Activated CD4-positive, alpha-beta memory T cell treated with anti-CD3 and anti-CD28 coated beads for 36 hours (primary cell): ENCODE measurements at regions of chr2 and their contacts with region 1.

Region 1: GRCh38 chr2:64101141-64101591 is 43.1 kb downstream of the PELI1 start:
- DNase-seq: no peak
- H3K4me3 Mint-ChIP-seq: peak overlapping the region; percentile 49
- H3K27ac Mint-ChIP-seq: peak overlapping the region; percentile 78
- H3K4me1 Mint-ChIP-seq: peaks cover 63% of the 10 kb centered on the region
- H3K27me3 Mint-ChIP-seq: no peaks in the 10 kb centered on the region

Region 2: DNA sequence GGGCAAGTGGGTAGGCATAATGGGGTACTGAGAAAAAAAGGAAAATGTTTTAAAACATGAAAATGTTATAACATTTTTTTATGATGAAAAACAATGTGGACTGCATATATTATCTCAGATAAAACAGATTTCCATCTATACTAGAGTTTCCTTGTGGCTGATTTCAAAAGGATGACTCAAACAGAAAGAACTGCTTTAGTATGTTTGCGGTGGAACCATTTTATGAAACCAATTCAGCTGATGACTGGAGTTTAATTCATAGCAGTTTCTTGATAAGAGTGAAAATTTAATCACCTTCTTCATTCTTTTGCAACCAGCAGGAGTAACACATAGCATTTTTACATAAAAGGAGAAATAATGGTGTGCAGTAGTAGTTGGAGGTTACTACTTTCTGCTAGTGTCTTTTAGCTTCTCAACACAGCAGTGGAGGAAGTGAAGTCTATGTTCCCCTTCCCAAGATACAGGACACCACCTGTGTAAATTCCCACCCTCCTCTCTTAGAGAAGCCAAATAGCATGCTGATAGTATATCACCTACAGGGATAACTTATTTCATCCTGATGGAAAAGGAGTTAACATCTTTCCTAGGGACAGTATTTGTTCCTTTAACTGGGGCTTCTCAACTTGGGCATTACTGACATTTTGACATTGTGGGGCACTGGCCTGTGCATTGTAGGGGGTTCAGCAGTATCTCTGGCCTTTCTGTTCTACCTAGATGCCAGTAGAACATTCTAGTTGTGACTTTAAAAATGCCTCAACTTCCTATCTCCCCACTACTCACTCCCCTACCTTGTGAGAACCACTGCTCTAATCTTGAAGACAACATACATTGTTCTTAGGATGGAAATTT is 13.1 kb after region 1 on chr2:
- CTCF ChIA-PET with region 1: interaction called, 3 read pairs
- POLR2A ChIA-PET with region 1: interaction called, 5 read pairs
- intact Hi-C with region 1: loop called (anchors 1 kb)
- DNase-seq: no peak
- H3K4me3 Mint-ChIP-seq: no peak overlapping the region
- H3K27ac Mint-ChIP-seq: peak overlapping the region; percentile 85
- H3K4me1 Mint-ChIP-seq: peaks cover 70% of the 10 kb centered on the region
- H3K27me3 Mint-ChIP-seq: no peaks in the 10 kb centered on the region

Region 3: GRCh38 chr2:64165706-64166105 is 64.5 kb after region 1 on chr2:
- CTCF ChIA-PET with region 1: no interaction called
- POLR2A ChIA-PET with region 1: no interaction called
- intact Hi-C with region 1: loop called (anchors 1 kb)
- DNase-seq: no peak
- H3K4me3 Mint-ChIP-seq: no peak overlapping the region
- H3K27ac Mint-ChIP-seq: no peak overlapping the region
- H3K4me1 Mint-ChIP-seq: no peaks in the 10 kb centered on the region
- H3K27me3 Mint-ChIP-seq: no peaks in the 10 kb centered on the region